A673 (cell line): ENCODE measurements at regions of chr16 and their contacts with region 1.

Region 1: GRCh38 chr16:62882552-62883221 is 846.4 kb upstream of the CDH8 start:
- DNase-seq: no peak
- H3K4me3 ChIP-seq: no peak overlapping the region
- H3K27ac ChIP-seq: no peak overlapping the region
- H3K4me1 ChIP-seq: no peaks in the 10 kb centered on the region
- H3K27me3 ChIP-seq: no peaks in the 10 kb centered on the region
- CTCF ChIP-seq: no peak

Region 2: DNA sequence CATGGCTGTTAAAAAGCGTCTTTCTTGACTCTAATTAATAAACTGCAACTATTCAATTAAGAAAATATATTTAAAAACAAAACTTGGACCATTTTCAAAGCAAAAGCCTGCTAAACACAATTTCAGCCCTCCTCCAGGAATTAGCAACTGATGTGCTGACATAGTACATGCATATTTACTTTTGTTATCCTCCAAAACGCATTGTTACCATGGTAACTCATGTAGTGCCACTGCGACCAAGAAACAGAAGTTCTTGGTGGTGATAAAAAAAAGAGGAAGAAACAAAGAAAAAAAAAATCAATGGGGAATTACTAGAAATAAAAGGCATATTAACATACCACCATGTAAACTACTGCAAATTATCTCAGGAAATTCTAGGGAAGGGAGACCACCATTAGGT is 53.1 kb before region 1 on chr16:
- CTCF ChIA-PET with region 1: no interaction called
- POLR2A ChIA-PET with region 1: no interaction called
- intact Hi-C with region 1: loop called (anchors 10 kb)
- DNase-seq: no peak
- H3K4me3 ChIP-seq: no peak overlapping the region
- H3K27ac ChIP-seq: no peak overlapping the region
- H3K4me1 ChIP-seq: no peaks in the 10 kb centered on the region
- H3K27me3 ChIP-seq: no peaks in the 10 kb centered on the region
- CTCF ChIP-seq: no peak